GM10248 (cell line): ENCODE measurements at regions of chr22 and their contacts with region 1.

Region 1: DNA sequence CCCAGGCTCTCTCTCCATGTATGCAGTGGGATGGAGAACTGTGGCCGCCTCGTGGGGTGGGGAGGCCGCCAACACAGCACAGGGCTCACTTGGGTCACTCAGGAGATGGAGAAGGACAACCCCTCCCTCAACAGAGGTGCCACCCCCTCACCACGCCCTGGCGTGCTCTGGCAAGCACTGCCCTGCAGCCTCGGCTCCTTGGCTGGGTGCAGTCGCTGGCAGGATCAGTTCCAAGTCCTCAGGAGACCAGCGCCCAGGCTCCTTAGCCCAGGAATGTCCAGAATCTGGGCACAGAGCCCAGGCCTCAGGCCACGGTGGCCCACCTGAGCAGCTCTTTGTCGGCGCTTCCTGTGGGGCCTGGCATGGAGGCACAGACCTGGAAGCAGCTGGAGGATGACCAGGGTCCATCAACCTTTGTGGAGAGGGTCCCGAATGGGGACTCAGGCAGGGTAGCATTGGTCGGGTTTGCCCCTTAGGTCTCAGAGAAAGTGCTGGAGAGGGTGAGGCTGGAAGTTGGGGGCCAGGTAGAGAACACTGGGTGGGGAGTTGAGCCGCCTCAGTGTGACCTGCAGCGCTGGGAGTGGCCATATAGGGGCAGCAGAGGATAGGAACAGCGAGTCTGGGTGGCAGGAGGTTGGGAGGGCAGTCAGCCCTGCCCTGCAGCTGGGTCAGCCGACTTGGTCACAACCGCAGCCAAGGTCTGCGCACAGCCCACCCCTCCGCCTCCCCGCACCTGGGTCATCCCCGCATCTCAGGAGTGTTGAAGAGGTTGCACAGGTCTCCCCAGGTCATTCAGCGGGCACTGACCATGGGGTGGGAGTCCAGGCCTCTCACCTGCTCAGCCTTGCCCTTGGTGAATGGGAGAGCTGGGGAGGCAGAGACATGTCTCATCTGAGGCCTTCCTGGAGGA is 8.2 kb downstream of the SUSD2 start:
- DNase-seq: peak; percentile 87
- CTCF ChIP-seq: peak; percentile 77

Region 2: GRCh38 chr22:24076091-24076867 is 113.2 kb before region 1 on chr22:
- CTCF ChIA-PET with region 1: no interaction called
- POLR2A ChIA-PET with region 1: no interaction called
- DNase-seq: no peak
- CTCF ChIP-seq: no peak

Region 3: GRCh38 chr22:24088816-24089215 is 100.7 kb before region 1 on chr22:
- CTCF ChIA-PET with region 1: no interaction called
- POLR2A ChIA-PET with region 1: no interaction called
- DNase-seq: no peak
- CTCF ChIP-seq: no peak

Region 4: DNA sequence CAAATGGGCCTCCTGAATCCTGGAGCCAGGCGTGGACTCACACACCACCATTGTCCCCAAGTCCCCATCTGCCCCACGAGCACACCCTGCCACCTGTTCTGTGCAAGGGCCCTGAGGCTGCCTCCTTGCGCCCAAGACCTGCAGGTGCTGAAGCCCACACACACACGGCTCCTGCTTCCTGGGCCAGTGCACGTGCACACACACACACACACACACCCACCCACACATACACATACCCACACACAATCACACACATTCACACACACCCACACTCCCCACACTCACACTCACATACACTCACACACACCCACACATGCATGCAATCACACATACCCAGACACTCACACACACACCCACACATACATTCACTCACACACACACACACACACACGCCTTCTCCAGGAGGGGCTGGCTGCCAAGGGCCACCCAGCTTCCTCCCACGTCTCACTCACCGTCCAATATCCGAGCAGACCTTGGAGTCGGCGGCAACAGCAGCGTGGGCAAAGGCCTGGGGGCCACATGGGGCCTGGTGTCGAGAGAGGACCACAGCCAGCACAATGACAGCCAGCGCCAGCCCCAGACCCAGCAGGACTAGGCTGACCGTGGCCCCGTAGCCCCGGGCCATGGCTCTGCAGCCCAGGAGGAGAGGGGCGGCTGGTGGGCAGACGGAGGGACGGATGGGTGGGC is 54.7 kb after region 1 on chr22:
- CTCF ChIA-PET with region 1: interaction called, 10 read pairs
- POLR2A ChIA-PET with region 1: no interaction called
- DNase-seq: no peak
- CTCF ChIP-seq: no peak